GM12878 (cell line): ENCODE measurements at regions of chr1 and their contacts with region 1.

Region 1: GRCh38 chr1:31394628-31395193 is 18.3 kb upstream of the SERINC2 start:
- DNase-seq: peak; percentile 21
- ATAC-seq: peak; percentile 98
- H3K4me3 ChIP-seq: peak overlapping the region; percentile 50; the same call in 1 of the 2 replicates
- H3K27ac ChIP-seq: no peak overlapping the region
- H3K4me1 ChIP-seq: peaks cover 2% of the 10 kb centered on the region
- H3K27me3 ChIP-seq: no peaks in the 10 kb centered on the region; a peak in 1 of 4 replicates
- CTCF ChIP-seq: peak; percentile 82 to 92 (median 83)
- EP300 ChIP-seq: peak in 1 of 2 experiments; percentile 10; a peak in 1 of 4 replicates
- POLR2A ChIP-seq: no peak
- RAD21 ChIP-seq: peak; percentile 72

Region 2: GRCh38 chr1:31356427-31356826 is 38.3 kb before region 1 on chr1:
- CTCF ChIA-PET with region 1: no interaction called
- POLR2A ChIA-PET with region 1: no interaction called
- RAD21 ChIA-PET with region 1: no interaction called
- SMC1A ChIA-PET with region 1: no interaction called
- in situ Hi-C with region 1: no loop called
- intact Hi-C with region 1: no loop called
- DNase-seq: no peak
- ATAC-seq: no peak
- H3K4me3 ChIP-seq: no peak overlapping the region
- H3K27ac ChIP-seq: no peak overlapping the region
- H3K4me1 ChIP-seq: no peaks in the 10 kb centered on the region
- H3K27me3 ChIP-seq: no peaks in the 10 kb centered on the region
- CTCF ChIP-seq: no peak
- EP300 ChIP-seq: no peak
- POLR2A ChIP-seq: no peak
- RAD21 ChIP-seq: no peak

Region 3: DNA sequence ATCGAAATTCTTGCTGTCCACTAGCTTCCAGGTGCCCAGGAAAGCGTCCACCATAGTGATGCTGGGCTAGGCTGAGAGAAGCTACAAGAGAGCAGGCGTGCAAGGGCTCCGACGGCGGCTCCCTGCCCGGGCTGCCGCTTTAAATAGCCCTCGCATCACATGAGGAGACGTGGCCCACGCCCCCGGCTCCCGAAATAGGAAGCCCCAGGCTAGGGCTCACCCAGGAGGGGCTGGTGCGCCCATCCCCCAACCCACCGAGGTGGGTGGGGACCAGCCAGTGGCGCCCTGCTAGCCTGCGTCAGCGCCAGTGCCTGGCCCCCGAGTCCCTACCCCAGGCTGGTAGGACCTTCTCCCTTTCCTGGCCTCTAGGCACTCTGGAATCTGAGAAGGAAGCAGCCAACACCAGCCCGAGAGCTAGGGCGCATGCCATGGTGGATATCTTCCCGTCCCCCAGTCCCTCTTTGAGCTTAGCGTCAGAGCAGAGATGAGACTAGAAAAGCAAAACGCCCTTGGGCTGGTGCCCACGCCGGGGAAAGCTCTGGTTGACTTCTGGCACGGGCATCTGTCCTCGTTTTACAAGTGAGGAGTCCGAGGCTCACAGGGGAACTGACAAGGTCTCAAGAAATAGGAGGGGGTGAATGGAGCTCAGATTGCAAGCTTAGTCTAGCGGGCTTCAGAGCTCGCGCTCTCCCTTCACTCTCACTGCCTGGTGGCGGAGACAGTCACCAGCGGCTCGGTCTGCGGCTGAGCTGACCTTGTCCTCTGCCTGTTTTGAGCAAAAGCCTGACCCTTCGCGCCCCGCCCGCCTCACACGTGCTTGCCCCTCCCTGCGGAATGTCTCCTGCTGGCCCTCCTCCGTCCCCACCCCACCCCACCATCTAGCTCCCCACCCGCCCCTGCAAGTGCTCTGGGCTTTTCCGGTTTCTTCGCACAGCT is 21.5 kb before region 1 on chr1 and contains the start of gene FABP3:
- CTCF ChIA-PET with region 1: interaction called, 42 read pairs
- POLR2A ChIA-PET with region 1: interaction called, 4 read pairs
- RAD21 ChIA-PET with region 1: interaction called, 15 read pairs
- SMC1A ChIA-PET with region 1: interaction called, 7 read pairs
- in situ Hi-C with region 1: no loop called
- intact Hi-C with region 1: no loop called
- DNase-seq: no peak
- ATAC-seq: peak; percentile 83
- H3K4me3 ChIP-seq: peak within 1 kb of the TSS; percentile 52
- H3K27ac ChIP-seq: no peak within 1 kb of the TSS
- H3K4me1 ChIP-seq: no peaks in the 10 kb centered on the region
- H3K27me3 ChIP-seq: no peaks in the 10 kb centered on the region
- CTCF ChIP-seq: 0 out of 6 replicates have a peak, but pooled peaks of 1 of the 3 experiments have one; percentile 2
- EP300 ChIP-seq: no peak
- POLR2A ChIP-seq: no peak
- RAD21 ChIP-seq: no peak
- polyA plus RNA-seq, gene FABP3: 0.72 to 1.2 TPM

Region 4: GRCh38 chr1:31382379-31382989 is 12.2 kb before region 1 on chr1:
- CTCF ChIA-PET with region 1: interaction called, 15 read pairs
- POLR2A ChIA-PET with region 1: no interaction called
- RAD21 ChIA-PET with region 1: interaction called, 3 read pairs
- SMC1A ChIA-PET with region 1: interaction called, 6 read pairs
- in situ Hi-C with region 1: no loop called
- intact Hi-C with region 1: no loop called
- DNase-seq: no peak
- ATAC-seq: no peak
- H3K4me3 ChIP-seq: no peak overlapping the region
- H3K27ac ChIP-seq: no peak overlapping the region
- H3K4me1 ChIP-seq: no peaks in the 10 kb centered on the region
- H3K27me3 ChIP-seq: no peaks in the 10 kb centered on the region
- CTCF ChIP-seq: no peak
- EP300 ChIP-seq: no peak
- POLR2A ChIP-seq: no peak
- RAD21 ChIP-seq: no peak

Region 5: GRCh38 chr1:31405578-31406245 is 11.0 kb after region 1 on chr1:
- CTCF ChIA-PET with region 1: interaction called, 39 read pairs
- POLR2A ChIA-PET with region 1: no interaction called
- RAD21 ChIA-PET with region 1: no interaction called
- SMC1A ChIA-PET with region 1: interaction called, 4 read pairs
- in situ Hi-C with region 1: no loop called
- intact Hi-C with region 1: no loop called
- DNase-seq: no peak
- ATAC-seq: no peak
- H3K4me3 ChIP-seq: no peak overlapping the region
- H3K27ac ChIP-seq: no peak overlapping the region
- H3K4me1 ChIP-seq: no peaks in the 10 kb centered on the region
- H3K27me3 ChIP-seq: peaks cover 0 to 2% of the 10 kb centered on the region in 2 experiments; a peak in 1 of 4 replicates
- CTCF ChIP-seq: no peak
- EP300 ChIP-seq: no peak
- POLR2A ChIP-seq: no peak
- RAD21 ChIP-seq: no peak

Region 6: DNA sequence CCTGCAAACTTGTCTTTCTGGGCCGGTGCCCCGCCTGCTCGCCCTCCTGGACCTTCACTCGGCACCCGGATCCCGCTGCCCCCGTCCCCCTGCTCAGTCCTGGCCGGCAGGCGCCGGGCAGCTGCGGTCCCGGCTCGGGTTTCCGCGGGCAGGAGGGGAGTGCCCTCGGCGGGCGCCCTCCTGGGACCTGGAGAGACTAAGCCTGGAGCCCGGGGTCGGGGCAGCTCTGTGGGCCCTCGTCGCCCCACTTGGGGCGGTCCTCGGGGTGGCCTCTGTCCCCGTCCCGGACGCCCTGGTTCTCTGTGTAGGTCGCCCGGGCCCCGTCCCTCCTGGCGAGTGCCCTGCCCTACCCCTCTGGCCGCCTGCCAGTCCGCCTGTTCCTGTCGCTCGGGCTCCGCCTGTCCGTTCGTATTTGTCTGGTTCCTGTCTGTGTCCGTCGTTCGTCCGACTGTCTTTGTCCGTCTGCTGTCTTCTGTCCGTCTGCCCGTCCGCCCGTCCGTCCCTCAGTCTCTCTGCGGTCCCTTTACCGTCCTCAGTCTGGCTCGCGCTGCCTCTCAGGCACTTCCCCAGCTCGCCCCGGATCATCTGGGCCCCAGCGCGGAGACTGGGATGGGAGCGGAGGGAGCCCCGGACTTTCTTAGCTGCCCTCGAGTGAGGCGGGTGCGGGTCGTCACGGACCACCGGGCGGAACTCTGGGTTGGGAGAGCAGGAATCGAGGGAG is 18.9 kb after region 1 on chr1:
- CTCF ChIA-PET with region 1: interaction called, 204 read pairs
- POLR2A ChIA-PET with region 1: no interaction called
- RAD21 ChIA-PET with region 1: interaction called, 99 read pairs
- SMC1A ChIA-PET with region 1: interaction called, 132 read pairs
- in situ Hi-C with region 1: no loop called
- intact Hi-C with region 1: no loop called
- DNase-seq: no peak
- ATAC-seq: peak; percentile 67
- H3K4me3 ChIP-seq: peak overlapping the region; percentile 65
- H3K27ac ChIP-seq: no peak overlapping the region
- H3K4me1 ChIP-seq: peaks cover 5% of the 10 kb centered on the region; the same call in 1 of the 2 replicates
- H3K27me3 ChIP-seq: peaks cover 2 to 12% of the 10 kb centered on the region in 2 experiments; a peak in 3 of 4 replicates
- CTCF ChIP-seq: no peak
- EP300 ChIP-seq: no peak
- POLR2A ChIP-seq: no peak
- RAD21 ChIP-seq: no peak

Region 7: GRCh38 chr1:31564134-31564989 is 169.7 kb after region 1 on chr1:
- CTCF ChIA-PET with region 1: interaction called, 11 read pairs
- POLR2A ChIA-PET with region 1: no interaction called
- RAD21 ChIA-PET with region 1: interaction called, 7 read pairs
- SMC1A ChIA-PET with region 1: interaction called, 3 read pairs
- in situ Hi-C with region 1: no loop called
- intact Hi-C with region 1: no loop called
- DNase-seq: no peak
- ATAC-seq: peak; percentile 91
- H3K4me3 ChIP-seq: no peak overlapping the region
- H3K27ac ChIP-seq: no peak overlapping the region
- H3K4me1 ChIP-seq: no peaks in the 10 kb centered on the region
- H3K27me3 ChIP-seq: no peaks in the 10 kb centered on the region
- CTCF ChIP-seq: peak; percentile 82 to 86 (median 83)
- EP300 ChIP-seq: no peak
- POLR2A ChIP-seq: no peak
- RAD21 ChIP-seq: peak; percentile 95

Region 8: GRCh38 chr1:31593770-31594632 is 199.3 kb after region 1 on chr1:
- CTCF ChIA-PET with region 1: interaction called, 21 read pairs
- POLR2A ChIA-PET with region 1: no interaction called
- RAD21 ChIA-PET with region 1: interaction called, 7 read pairs
- SMC1A ChIA-PET with region 1: interaction called, 5 read pairs
- in situ Hi-C with region 1: no loop called
- intact Hi-C with region 1: no loop called
- DNase-seq: peak; percentile 26
- ATAC-seq: peak; percentile 100
- H3K4me3 ChIP-seq: no peak overlapping the region
- H3K27ac ChIP-seq: no peak overlapping the region
- H3K4me1 ChIP-seq: no peaks in the 10 kb centered on the region; the same call in 1 of the 2 replicates
- H3K27me3 ChIP-seq: no peaks in the 10 kb centered on the region
- CTCF ChIP-seq: peak; percentile 90 to 97 (median 97)
- EP300 ChIP-seq: no peak
- POLR2A ChIP-seq: no peak
- RAD21 ChIP-seq: peak; percentile 67